Panc1 (cell line): ENCODE measurements at regions of chr2 and their contacts with region 1.

Region 1: GRCh38 chr2:70124983-70125480 is 37.8 kb downstream of the PCBP1 start:
- DNase-seq: no peak
- ATAC-seq: peak; percentile 78
- H3K4me3 ChIP-seq: peak overlapping the region; percentile 49 to 88
- H3K27ac ChIP-seq: peak overlapping the region; percentile 95
- H3K4me1 ChIP-seq: peaks cover 23% of the 10 kb centered on the region
- H3K27me3 ChIP-seq: no peaks in the 10 kb centered on the region
- CTCF ChIP-seq: no peak

Region 2: GRCh38 chr2:70104231-70105111 is 20.6 kb before region 1 on chr2:
- CTCF ChIA-PET with region 1: no interaction called
- POLR2A ChIA-PET with region 1: interaction called, 14 read pairs
- in situ Hi-C with region 1: no loop called
- intact Hi-C with region 1: no loop called
- DNase-seq: no peak
- ATAC-seq: no peak
- H3K4me3 ChIP-seq: no peak overlapping the region
- H3K27ac ChIP-seq: peak overlapping the region; percentile 56
- H3K4me1 ChIP-seq: peaks cover 23% of the 10 kb centered on the region
- H3K27me3 ChIP-seq: no peaks in the 10 kb centered on the region
- CTCF ChIP-seq: no peak